ENCODE measurements at regions of chr5 and their contacts with region 1.

Region 1: GRCh38 chr5:72523960-72524582 is 16.9 kb upstream of the ZNF366 start:
- DNase-seq: peak; percentile 79
- ATAC-seq: peak; percentile 77
- H3K4me3 ChIP-seq: no peak overlapping the region
- H3K27ac ChIP-seq: no peak overlapping the region
- H3K4me1 ChIP-seq: peaks cover 8% of the 10 kb centered on the region; the same call in 1 of the 2 replicates
- H3K27me3 ChIP-seq: no peaks in the 10 kb centered on the region
- CTCF ChIP-seq: peak; percentile 79

Region 2: GRCh38 chr5:71782771-71783770 is 741.0 kb before region 1 on chr5:
- CTCF ChIA-PET with region 1: no interaction called
- POLR2A ChIA-PET with region 1: no interaction called
- intact Hi-C with region 1: loop called (anchors 5 kb)
- DNase-seq: peak; percentile 81
- ATAC-seq: peak; percentile 81
- H3K4me3 ChIP-seq: peak overlapping the region; percentile 63
- H3K27ac ChIP-seq: no peak overlapping the region
- H3K4me1 ChIP-seq: peaks cover 5% of the 10 kb centered on the region; the same call in 1 of the 2 replicates
- H3K27me3 ChIP-seq: no peaks in the 10 kb centered on the region
- CTCF ChIP-seq: peak; percentile 85

Region 3: GRCh38 chr5:72366324-72366976 is 157.6 kb before region 1 on chr5:
- CTCF ChIA-PET with region 1: interaction called, 10 read pairs
- POLR2A ChIA-PET with region 1: no interaction called
- intact Hi-C with region 1: loop called (anchors 1 kb)
- DNase-seq: peak; percentile 78
- ATAC-seq: peak; percentile 73
- H3K4me3 ChIP-seq: no peak overlapping the region
- H3K27ac ChIP-seq: no peak overlapping the region
- H3K4me1 ChIP-seq: peaks cover 19% of the 10 kb centered on the region
- H3K27me3 ChIP-seq: no peaks in the 10 kb centered on the region
- CTCF ChIP-seq: peak; percentile 83

Region 4: DNA sequence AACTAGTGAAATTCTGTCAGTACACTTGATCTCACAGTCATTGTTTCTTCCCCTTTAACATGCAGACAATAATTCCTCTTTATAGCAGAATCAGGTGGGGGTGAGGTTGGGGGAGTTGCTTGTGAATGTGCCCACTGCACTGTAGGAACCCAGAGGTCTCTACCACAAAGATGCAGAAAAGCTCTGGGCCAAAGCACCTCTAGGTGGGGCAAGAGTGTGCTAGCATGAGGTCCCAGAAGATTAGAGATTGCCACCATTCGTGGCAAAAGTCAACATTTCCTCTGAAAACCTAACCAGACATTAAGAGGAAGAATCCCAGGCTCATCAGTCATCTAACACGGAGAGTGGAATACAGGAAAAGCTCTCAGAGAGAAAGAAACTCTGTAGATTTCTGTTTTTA is 129.4 kb before region 1 on chr5:
- CTCF ChIA-PET with region 1: no interaction called
- POLR2A ChIA-PET with region 1: no interaction called
- intact Hi-C with region 1: loop called (anchors 10 kb)
- DNase-seq: peak; percentile 30
- ATAC-seq: no peak
- H3K4me3 ChIP-seq: no peak overlapping the region
- H3K27ac ChIP-seq: no peak overlapping the region
- H3K4me1 ChIP-seq: peaks cover 32% of the 10 kb centered on the region
- H3K27me3 ChIP-seq: no peaks in the 10 kb centered on the region
- CTCF ChIP-seq: peak; percentile 52; the same call in 1 of the 2 replicates

Region 5: GRCh38 chr5:72451741-72452505 is 72.1 kb before region 1 on chr5:
- CTCF ChIA-PET with region 1: no interaction called
- POLR2A ChIA-PET with region 1: interaction called, 10 read pairs
- intact Hi-C with region 1: no loop called
- DNase-seq: peak; percentile 40
- ATAC-seq: peak; percentile 66
- H3K4me3 ChIP-seq: peak overlapping the region; percentile 23; the same call in 1 of the 2 replicates
- H3K27ac ChIP-seq: peak overlapping the region; percentile 55
- H3K4me1 ChIP-seq: peaks cover 20% of the 10 kb centered on the region
- H3K27me3 ChIP-seq: no peaks in the 10 kb centered on the region
- CTCF ChIP-seq: no peak

Region 6: GRCh38 chr5:72597456-72597948 is 73.4 kb after region 1 on chr5:
- CTCF ChIA-PET with region 1: no interaction called
- POLR2A ChIA-PET with region 1: no interaction called
- intact Hi-C with region 1: no loop called
- DNase-seq: peak; percentile 31
- ATAC-seq: peak; percentile 5; the same call in 1 of the 2 replicates
- H3K4me3 ChIP-seq: no peak overlapping the region
- H3K27ac ChIP-seq: peak overlapping the region; percentile 100
- H3K4me1 ChIP-seq: peaks cover 55% of the 10 kb centered on the region
- H3K27me3 ChIP-seq: no peaks in the 10 kb centered on the region
- CTCF ChIP-seq: no peak

Measured in PC-3 (cell line).